Activated CD4-positive, alpha-beta T cell treated with anti-CD3 and anti-CD28 coated beads for 36 hours (primary cell): ENCODE measurements at regions of chr19 and their contacts with region 1.

Region 1: GRCh38 chr19:5292822-5293611 is 47.6 kb downstream of the PTPRS start:
- DNase-seq: peak; percentile 78
- ATAC-seq: peak; percentile 86
- H3K4me3 Mint-ChIP-seq: peak overlapping the region; percentile 49
- H3K27ac Mint-ChIP-seq: no peak overlapping the region
- H3K4me1 Mint-ChIP-seq: peaks cover 7% of the 10 kb centered on the region
- H3K27me3 Mint-ChIP-seq: peaks cover 10% of the 10 kb centered on the region

Region 2: DNA sequence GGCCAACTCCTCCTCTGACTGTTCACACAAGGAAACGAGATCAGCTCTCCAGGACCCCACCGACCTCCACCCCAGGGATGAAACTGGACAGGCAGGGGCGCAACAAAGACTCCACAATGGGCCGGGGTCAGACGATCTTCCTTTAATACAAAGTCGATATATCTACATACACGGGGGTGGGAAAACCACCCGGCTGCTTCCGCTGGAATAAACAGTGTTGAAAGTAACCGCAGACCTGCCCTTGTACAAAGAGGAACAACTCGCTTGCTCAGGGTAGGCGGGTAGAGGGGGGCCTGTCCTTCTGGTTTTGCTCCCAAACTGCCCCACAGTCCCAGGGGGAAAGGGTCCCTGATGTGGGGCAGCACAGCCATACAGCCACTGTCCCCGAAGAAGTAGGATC is 87.6 kb before region 1 on chr19:
- CTCF ChIA-PET with region 1: no interaction called
- POLR2A ChIA-PET with region 1: no interaction called
- intact Hi-C with region 1: no loop called
- DNase-seq: peak; percentile 48
- ATAC-seq: peak; percentile 39
- H3K4me3 Mint-ChIP-seq: peak overlapping the region; percentile 26
- H3K27ac Mint-ChIP-seq: no peak overlapping the region
- H3K4me1 Mint-ChIP-seq: peaks cover 6% of the 10 kb centered on the region
- H3K27me3 Mint-ChIP-seq: no peaks in the 10 kb centered on the region

Region 3: GRCh38 chr19:5340637-5341447 is 47.8 kb after region 1 on chr19 and contains the start of gene PTPRS:
- CTCF ChIA-PET with region 1: no interaction called
- POLR2A ChIA-PET with region 1: no interaction called
- intact Hi-C with region 1: loop called in 1 of 2 experiments (anchors 1 kb)
- DNase-seq: peak; percentile 83
- ATAC-seq: peak; percentile 84
- H3K4me3 Mint-ChIP-seq: peak within 1 kb of the TSS; percentile 28
- H3K27ac Mint-ChIP-seq: no peak within 1 kb of the TSS
- H3K4me1 Mint-ChIP-seq: peaks cover 12% of the 10 kb centered on the region
- H3K27me3 Mint-ChIP-seq: peaks cover 42% of the 10 kb centered on the region
- total RNA-seq, gene PTPRS: 1.8 TPM